CD14-positive monocyte (primary cell): ENCODE measurements at regions of chr2 and their contacts with region 1.

Region 1: DNA sequence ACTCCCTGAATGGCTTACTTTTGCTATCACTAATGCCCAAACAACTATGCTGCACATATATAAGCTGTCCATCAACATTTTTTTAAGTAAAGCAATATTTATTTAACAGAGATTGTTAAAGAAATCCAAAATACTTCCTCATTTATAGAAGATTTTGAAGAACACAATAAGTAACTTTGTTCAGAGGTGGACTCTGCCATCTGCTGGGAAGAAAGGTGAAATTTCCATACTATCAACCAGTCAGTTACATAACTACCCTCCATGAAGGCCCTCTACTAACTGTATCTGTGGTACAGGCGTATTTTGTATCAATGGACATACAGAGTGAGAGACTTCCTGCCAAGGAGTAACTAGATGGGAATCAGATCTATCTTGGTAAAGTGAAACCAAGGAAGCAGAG is 106.0 kb downstream of the DTNB start:
- DNase-seq: peak; percentile 58 to 78 (median 67)
- H3K4me3 ChIP-seq: peak overlapping the region in 1 of 3 experiments; percentile 31
- H3K4me3 Mint-ChIP-seq: no peak overlapping the region
- H3K27ac ChIP-seq: peak overlapping the region in 1 of 2 donors; percentile 78
- H3K27ac Mint-ChIP-seq: peak overlapping the region; percentile 87 to 95 (median 92)
- H3K4me1 ChIP-seq: peaks cover 18 to 19% of the 10 kb centered on the region in 2 donors
- H3K4me1 Mint-ChIP-seq: peaks cover 13% of the 10 kb centered on the region
- H3K27me3 ChIP-seq: no peaks in the 10 kb centered on the region
- H3K27me3 Mint-ChIP-seq: peaks cover 0 to 1% (median 0%) of the 10 kb centered on the region in 3 donors
- CTCF ChIP-seq: peak; percentile 78

Region 2: DNA sequence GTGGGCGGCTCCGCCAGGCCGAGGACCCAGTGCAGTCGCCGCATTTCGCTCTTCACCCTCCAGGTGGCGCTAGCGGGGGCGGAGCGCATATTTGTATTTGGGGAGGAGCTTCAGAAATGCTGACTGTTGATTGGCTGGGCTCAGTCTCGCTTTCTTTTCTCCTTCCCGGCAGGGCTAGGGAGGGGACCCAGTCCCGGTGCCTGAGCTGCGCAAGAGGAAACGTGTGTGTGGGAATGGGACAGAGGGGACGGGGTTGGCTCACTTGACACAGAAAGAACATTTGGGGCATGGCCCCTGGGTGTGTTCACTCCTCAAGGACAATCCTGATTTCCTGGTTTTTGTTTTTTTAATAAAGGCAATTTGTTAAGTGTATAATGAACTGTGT is 205.4 kb before region 1 on chr2:
- intact Hi-C with region 1: loop called in 1 of 2 experiments (anchors 5 kb)
- DNase-seq: peak; percentile 88 to 93 (median 93)
- H3K4me3 ChIP-seq: peak overlapping the region; percentile 42 to 85 (median 57)
- H3K4me3 Mint-ChIP-seq: peak overlapping the region; percentile 80 to 99
- H3K27ac ChIP-seq: peak overlapping the region; percentile 63 to 79
- H3K27ac Mint-ChIP-seq: peak overlapping the region; percentile 87 to 97 (median 91)
- H3K4me1 ChIP-seq: peaks cover 12 to 19% of the 10 kb centered on the region in 2 donors
- H3K4me1 Mint-ChIP-seq: peaks cover 12% of the 10 kb centered on the region
- H3K27me3 ChIP-seq: no peaks in the 10 kb centered on the region
- H3K27me3 Mint-ChIP-seq: peaks cover 4 to 5% (median 4%) of the 10 kb centered on the region in 3 donors
- CTCF ChIP-seq: peak; percentile 95

Region 3: DNA sequence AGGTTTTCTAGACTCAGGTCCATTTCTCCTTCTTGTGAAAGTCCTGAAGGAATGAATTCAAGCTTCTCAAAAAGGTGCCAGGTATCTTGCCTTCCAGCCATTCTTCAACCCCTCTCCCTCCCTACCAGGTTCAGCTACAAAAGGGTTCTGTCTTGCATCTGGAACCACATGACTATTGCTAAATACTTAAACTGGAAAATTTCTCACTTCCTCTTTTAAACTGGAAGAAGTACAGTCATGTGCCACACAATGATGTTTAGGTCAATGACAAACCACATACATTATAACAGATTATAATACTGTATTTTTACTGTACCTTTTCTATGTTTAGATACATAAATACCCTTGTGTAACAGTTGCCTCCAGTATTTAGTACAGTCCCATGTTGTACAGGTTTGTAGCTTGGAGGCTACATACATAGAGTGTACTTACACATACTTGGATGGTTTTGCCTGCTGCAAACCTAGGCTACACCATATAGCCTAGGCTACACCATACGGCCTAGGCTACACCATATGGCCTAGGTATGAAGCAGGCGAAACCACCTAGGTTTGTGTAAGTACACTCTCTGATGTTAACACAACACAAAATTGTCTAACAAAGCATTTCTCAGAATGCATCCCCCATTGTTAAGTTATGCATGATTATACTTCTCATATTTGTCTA is 83.7 kb before region 1 on chr2:
- intact Hi-C with region 1: loop called in 1 of 2 experiments (anchors 10 kb)
- DNase-seq: peak; percentile 73 to 90 (median 87)
- H3K4me3 ChIP-seq: peak overlapping the region in 1 of 3 experiments; percentile 35
- H3K4me3 Mint-ChIP-seq: no peak overlapping the region
- H3K27ac ChIP-seq: peak overlapping the region; percentile 11 to 60
- H3K27ac Mint-ChIP-seq: peak overlapping the region in 6 of 7 donors; percentile 74 to 88 (median 83)
- H3K4me1 ChIP-seq: peaks cover 15 to 21% of the 10 kb centered on the region in 2 donors
- H3K4me1 Mint-ChIP-seq: peaks cover 24% of the 10 kb centered on the region
- H3K27me3 ChIP-seq: no peaks in the 10 kb centered on the region
- H3K27me3 Mint-ChIP-seq: peaks cover 0 to 1% (median 0%) of the 10 kb centered on the region in 3 donors
- CTCF ChIP-seq: no peak